Activated CD4-positive, alpha-beta T cell treated with anti-CD3 and anti-CD28 coated beads, Interleukin-2, amount 10 ng/mL, durations not matched to agents 7 days and 5 days (primary cell): ENCODE measurements at regions of chr19 and their contacts with region 1.

Region 1: GRCh38 chr19:46614114-46614722 is 10.7 kb downstream of the PTGIR start:
- DNase-seq: peak; percentile 83
- H3K4me3 Mint-ChIP-seq: no peak overlapping the region
- H3K27ac Mint-ChIP-seq: peak overlapping the region; percentile 79
- H3K4me1 Mint-ChIP-seq: peaks cover 82% of the 10 kb centered on the region
- H3K27me3 Mint-ChIP-seq: no peaks in the 10 kb centered on the region

Region 2: DNA sequence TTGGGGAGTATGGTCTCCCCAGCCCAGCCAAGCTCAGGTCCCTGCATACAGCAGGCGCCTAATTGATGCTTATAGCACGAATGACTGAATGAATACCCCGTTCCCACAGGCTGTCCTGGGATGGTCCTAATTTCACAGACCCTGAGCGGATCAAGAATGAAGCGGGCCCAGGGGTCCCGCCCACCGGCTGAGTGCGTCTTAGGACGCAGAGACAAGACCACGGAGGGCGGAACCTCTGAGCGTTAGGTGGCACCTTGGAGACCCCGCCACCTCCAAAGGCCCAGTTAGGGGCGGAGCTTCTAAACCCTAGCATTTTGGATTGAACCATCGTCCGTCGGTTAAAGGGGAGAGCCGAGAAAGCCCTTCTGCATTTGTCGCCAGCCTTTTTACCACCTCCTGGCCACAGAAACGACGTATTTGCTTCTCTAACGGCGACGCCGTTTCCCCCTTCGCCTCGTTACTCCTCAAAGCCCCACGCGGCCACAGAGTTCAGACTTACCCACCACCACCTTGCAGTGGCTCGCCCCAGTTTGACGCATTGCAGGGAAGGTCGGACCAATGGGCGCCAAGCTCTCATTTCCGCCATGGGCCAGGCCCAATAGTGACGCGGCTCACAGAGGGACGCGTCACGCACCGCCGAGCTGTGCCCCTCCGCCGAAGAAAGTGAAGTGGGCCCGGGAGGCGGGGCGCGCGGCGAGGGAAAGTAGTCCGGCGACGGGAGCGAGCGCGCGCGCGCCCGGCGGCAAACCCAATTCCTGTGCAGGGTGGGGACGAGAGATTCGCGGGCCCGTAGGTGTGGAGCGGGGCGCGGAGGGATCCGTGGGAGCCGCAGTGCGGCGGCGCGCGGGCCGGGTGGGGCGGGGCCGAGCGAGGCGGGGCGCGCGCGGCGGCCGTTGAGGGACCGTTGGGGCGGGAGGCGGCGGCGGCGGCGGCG is 13.6 kb before region 1 on chr19:
- CTCF ChIA-PET with region 1: interaction called, 30 read pairs
- POLR2A ChIA-PET with region 1: interaction called, 26 read pairs
- DNase-seq: peak; percentile 97
- H3K4me3 Mint-ChIP-seq: peak overlapping the region; percentile 95
- H3K27ac Mint-ChIP-seq: peak overlapping the region; percentile 100
- H3K4me1 Mint-ChIP-seq: peaks cover 28% of the 10 kb centered on the region
- H3K27me3 Mint-ChIP-seq: peaks cover 5% of the 10 kb centered on the region

Region 3: DNA sequence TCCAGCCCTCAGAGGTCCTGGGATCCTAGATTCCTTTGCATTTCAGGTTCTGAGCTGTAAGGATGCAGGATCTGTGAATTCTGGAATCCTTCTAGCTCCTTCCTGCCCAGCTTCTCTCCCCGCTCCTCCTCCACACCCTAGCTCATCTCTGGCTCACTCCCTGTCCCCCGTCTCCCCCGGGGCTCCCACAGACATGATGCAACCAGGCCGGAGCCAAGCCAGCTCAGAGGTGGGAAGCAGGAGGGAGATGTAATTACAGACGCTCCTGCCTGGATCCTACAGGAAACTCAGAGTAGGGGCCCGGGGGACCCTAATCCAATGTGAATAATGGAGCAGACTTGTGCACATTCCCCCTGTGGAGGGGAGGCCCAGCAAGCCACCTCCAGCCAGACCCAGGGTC is 17.3 kb after region 1 on chr19:
- CTCF ChIA-PET with region 1: interaction called, 14 read pairs
- POLR2A ChIA-PET with region 1: interaction called, 3 read pairs
- DNase-seq: no peak
- H3K4me3 Mint-ChIP-seq: no peak overlapping the region
- H3K27ac Mint-ChIP-seq: no peak overlapping the region
- H3K4me1 Mint-ChIP-seq: peaks cover 43% of the 10 kb centered on the region
- H3K27me3 Mint-ChIP-seq: peaks cover 12% of the 10 kb centered on the region

Region 4: DNA sequence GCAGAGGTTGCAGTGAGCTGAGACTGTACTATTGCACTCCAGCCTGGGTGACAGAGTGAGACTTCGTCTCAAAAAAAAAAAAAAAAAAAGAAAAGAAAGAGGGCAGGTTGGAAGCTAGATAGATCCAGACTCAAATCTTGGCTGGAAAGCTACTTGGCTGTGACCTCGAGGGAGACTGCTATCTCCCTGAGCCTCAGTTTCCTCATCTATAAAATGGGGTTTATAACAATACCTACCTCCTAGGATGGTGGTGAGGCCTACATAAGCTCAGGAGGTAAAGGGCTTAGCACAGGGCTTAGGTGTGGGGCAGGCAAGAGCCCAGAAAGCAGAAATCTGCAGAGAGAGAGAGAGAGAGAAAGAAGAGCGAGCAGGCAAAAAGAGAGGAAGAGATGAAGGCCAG is 71.0 kb after region 1 on chr19:
- CTCF ChIA-PET with region 1: no interaction called
- POLR2A ChIA-PET with region 1: no interaction called
- DNase-seq: no peak
- H3K4me3 Mint-ChIP-seq: no peak overlapping the region
- H3K27ac Mint-ChIP-seq: no peak overlapping the region
- H3K4me1 Mint-ChIP-seq: no peaks in the 10 kb centered on the region
- H3K27me3 Mint-ChIP-seq: no peaks in the 10 kb centered on the region

Region 5: GRCh38 chr19:46736544-46737297 is 122.5 kb after region 1 on chr19:
- CTCF ChIA-PET with region 1: no interaction called
- POLR2A ChIA-PET with region 1: no interaction called
- DNase-seq: no peak
- H3K4me3 Mint-ChIP-seq: no peak overlapping the region
- H3K27ac Mint-ChIP-seq: no peak overlapping the region
- H3K4me1 Mint-ChIP-seq: peaks cover 13% of the 10 kb centered on the region
- H3K27me3 Mint-ChIP-seq: no peaks in the 10 kb centered on the region